CD14-positive monocyte (primary cell): ENCODE measurements at regions of chr22 and their contacts with region 1.

Region 1: GRCh38 chr22:36387752-36388518 is at the start of gene MYH9:
- DNase-seq: peak; percentile 99 to 100 (median 100)
- H3K4me3 ChIP-seq: peak within 1 kb of the TSS; percentile 71 to 99 (median 87)
- H3K4me3 Mint-ChIP-seq: peak within 1 kb of the TSS; percentile 92 to 95
- H3K27ac ChIP-seq: peak within 1 kb of the TSS; percentile 90 to 98
- H3K27ac Mint-ChIP-seq: peak within 1 kb of the TSS; percentile 94 to 99 (median 97)
- H3K4me1 ChIP-seq: peaks cover 61 to 74% of the 10 kb centered on the region in 2 donors
- H3K4me1 Mint-ChIP-seq: peaks cover 57% of the 10 kb centered on the region
- H3K27me3 ChIP-seq: no peaks in the 10 kb centered on the region
- H3K27me3 Mint-ChIP-seq: peaks cover 0 to 3% (median 1%) of the 10 kb centered on the region in 3 donors
- CTCF ChIP-seq: no peak
- polyA plus RNA-seq, gene MYH9: 35.6 to 163 (median 79.5) TPM

Region 2: DNA sequence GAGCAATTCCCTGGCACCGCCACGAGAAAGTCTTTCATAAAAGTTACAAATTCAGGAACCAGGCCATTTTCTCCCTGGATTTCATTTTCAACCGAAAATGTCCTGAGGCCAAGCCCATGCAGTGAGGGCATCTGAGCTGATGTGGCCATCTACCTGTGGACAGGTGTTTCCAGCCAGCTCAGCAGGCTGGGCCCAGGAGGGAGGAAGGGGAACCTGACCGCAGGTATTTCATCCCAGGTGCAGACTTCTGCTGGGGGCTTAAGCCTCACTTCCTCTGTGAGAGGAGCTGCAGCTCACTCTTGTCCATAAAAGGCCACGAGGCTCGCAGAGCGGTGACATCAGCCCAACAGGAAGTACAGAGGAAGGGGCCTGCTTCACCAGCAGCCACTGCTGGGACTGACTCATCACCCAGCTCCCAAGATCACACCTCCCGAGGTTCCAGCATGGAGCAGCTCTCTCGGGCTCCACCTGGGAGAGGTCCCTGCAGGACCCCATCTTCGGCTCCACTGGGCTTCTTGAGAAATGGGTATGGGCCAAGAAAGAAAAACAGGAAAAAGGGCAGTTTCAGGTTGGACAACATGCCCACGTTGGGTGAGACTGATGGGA is 56.5 kb before region 1 on chr22:
- intact Hi-C with region 1: loop called (anchors 1 to 5 kb)
- DNase-seq: peak; percentile 88 to 97 (median 94)
- H3K4me3 ChIP-seq: peak overlapping the region in 1 of 3 experiments; percentile 52
- H3K4me3 Mint-ChIP-seq: peak overlapping the region; percentile 63 to 88
- H3K27ac ChIP-seq: peak overlapping the region; percentile 89 to 92
- H3K27ac Mint-ChIP-seq: peak overlapping the region; percentile 96 to 99 (median 99)
- H3K4me1 ChIP-seq: peaks cover 74 to 79% of the 10 kb centered on the region in 2 donors
- H3K4me1 Mint-ChIP-seq: peaks cover 84% of the 10 kb centered on the region
- H3K27me3 ChIP-seq: no peaks in the 10 kb centered on the region
- H3K27me3 Mint-ChIP-seq: no peaks in the 10 kb centered on the region
- CTCF ChIP-seq: no peak

Region 3: GRCh38 chr22:36369922-36370791 is 17.8 kb before region 1 on chr22:
- intact Hi-C with region 1: loop called in 1 of 2 experiments (anchors 2 kb)
- DNase-seq: peak; percentile 66 to 76 (median 73)
- H3K4me3 ChIP-seq: peak overlapping the region in 1 of 3 experiments; percentile 45
- H3K4me3 Mint-ChIP-seq: peak overlapping the region; percentile 42 to 64
- H3K27ac ChIP-seq: peak overlapping the region; percentile 88 to 95
- H3K27ac Mint-ChIP-seq: peak overlapping the region; percentile 92 to 97 (median 97)
- H3K4me1 ChIP-seq: peaks cover 97 to 100% of the 10 kb centered on the region in 2 donors
- H3K4me1 Mint-ChIP-seq: peaks cover 96% of the 10 kb centered on the region
- H3K27me3 ChIP-seq: no peaks in the 10 kb centered on the region
- H3K27me3 Mint-ChIP-seq: peaks cover 0 to 2% (median 0%) of the 10 kb centered on the region in 3 donors
- CTCF ChIP-seq: no peak

Region 4: DNA sequence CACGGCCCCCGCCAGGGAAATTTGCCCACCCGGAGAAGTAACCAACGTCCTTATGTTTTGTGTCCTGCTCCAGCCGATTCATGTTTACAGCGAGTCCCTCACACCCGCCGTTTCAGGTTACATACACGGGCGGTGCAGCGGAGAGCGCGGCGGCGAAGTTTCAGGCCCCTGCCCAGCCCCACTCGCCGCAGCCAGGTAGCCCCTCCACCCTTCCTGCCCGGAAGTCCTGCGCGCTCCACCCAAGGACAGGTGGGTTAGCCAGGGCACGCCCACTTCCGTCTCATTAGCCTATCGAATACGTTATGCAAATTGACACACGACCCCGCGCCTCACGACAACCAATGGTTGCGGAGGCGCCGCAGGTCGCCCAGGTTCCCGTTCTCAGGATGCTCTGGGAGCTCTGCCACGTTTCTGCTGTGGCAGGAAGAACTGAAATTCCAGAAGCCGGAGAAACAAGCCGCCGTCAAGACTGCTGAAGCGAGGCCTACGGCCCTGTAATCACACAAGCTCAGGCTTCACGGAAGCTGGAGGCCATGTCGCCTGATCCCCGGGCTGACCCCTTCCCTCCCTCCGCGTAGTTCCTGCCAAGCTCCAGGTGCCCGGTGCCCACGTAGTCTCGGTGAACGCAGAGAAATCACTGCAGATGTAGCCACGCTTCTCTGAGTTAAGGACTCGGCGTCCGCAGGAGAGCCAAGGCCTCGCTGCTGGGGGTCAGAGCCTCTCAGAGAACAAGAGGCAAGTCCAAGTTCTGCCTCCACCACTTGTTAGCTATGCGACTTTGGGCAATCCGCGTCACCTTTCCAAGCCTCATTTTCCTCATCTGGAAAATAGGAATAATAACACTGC is 22.2 kb after region 1 on chr22:
- intact Hi-C with region 1: loop called in 1 of 2 experiments (anchors 2 kb)
- DNase-seq: peak in 2 of 3 donors; percentile 50 to 64
- H3K4me3 ChIP-seq: peak overlapping the region; percentile 7 to 73 (median 32)
- H3K4me3 Mint-ChIP-seq: peak overlapping the region; percentile 80 to 92
- H3K27ac ChIP-seq: peak overlapping the region in 1 of 2 donors; percentile 46
- H3K27ac Mint-ChIP-seq: peak overlapping the region in 6 of 7 donors; percentile 35 to 80 (median 56)
- H3K4me1 ChIP-seq: peaks cover 48 to 49% of the 10 kb centered on the region in 2 donors
- H3K4me1 Mint-ChIP-seq: peaks cover 53% of the 10 kb centered on the region
- H3K27me3 ChIP-seq: no peaks in the 10 kb centered on the region
- H3K27me3 Mint-ChIP-seq: peaks cover 0 to 3% (median 2%) of the 10 kb centered on the region in 3 donors
- CTCF ChIP-seq: no peak

Region 5: GRCh38 chr22:36425977-36426523 is 38.1 kb after region 1 on chr22:
- intact Hi-C with region 1: no loop called
- DNase-seq: peak in 2 of 3 donors; percentile 59 to 62
- H3K4me3 ChIP-seq: no peak overlapping the region
- H3K4me3 Mint-ChIP-seq: peak overlapping the region in 1 of 2 donors; percentile 26
- H3K27ac ChIP-seq: peak overlapping the region; percentile 30 to 49
- H3K27ac Mint-ChIP-seq: peak overlapping the region; percentile 46 to 82 (median 77)
- H3K4me1 ChIP-seq: peaks cover 41 to 43% of the 10 kb centered on the region in 2 donors
- H3K4me1 Mint-ChIP-seq: peaks cover 42% of the 10 kb centered on the region
- H3K27me3 ChIP-seq: no peaks in the 10 kb centered on the region
- H3K27me3 Mint-ChIP-seq: no peaks in the 10 kb centered on the region
- CTCF ChIP-seq: no peak

Region 6: DNA sequence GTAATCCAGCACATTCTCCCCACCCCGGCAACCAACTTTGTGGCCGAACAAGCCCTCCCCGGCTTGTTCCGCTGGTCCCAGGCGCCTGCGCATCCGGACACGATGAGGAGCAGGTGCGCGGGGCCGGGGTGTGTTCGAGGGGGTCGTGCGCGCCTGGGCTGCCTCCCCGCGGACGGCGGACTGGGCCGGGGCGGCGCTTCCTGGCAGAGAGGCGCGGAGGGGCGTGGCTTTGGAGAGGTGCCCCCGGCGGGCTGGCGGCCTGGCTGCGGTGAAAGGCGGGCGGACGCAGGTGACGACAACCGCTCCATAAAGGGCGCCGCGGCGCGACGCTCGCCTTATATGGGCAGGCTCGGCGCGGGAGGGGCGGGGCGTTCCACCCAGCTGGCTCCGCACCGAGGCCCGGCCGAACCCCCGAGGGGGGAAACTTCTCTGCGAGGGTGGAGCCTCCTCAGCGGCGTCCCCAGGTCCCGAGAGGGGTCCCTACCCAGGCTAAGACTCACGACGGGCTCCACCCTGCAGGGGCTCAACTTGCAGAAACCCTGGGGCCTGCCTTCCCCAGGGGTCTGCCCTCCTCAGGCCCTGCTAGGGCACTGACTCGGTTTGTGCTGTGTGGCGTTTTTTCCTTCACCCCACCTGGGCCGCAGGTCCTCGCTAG is 67.1 kb after region 1 on chr22:
- intact Hi-C with region 1: loop called (anchors 5 kb)
- DNase-seq: peak; percentile 63 to 84 (median 77)
- H3K4me3 ChIP-seq: peak overlapping the region; percentile 28 to 85 (median 48)
- H3K4me3 Mint-ChIP-seq: peak overlapping the region; percentile 70 to 71
- H3K27ac ChIP-seq: peak overlapping the region; percentile 37 to 67
- H3K27ac Mint-ChIP-seq: peak overlapping the region; percentile 18 to 90 (median 76)
- H3K4me1 ChIP-seq: peaks cover 67 to 75% of the 10 kb centered on the region in 2 donors
- H3K4me1 Mint-ChIP-seq: peaks cover 58% of the 10 kb centered on the region
- H3K27me3 ChIP-seq: no peaks in the 10 kb centered on the region
- H3K27me3 Mint-ChIP-seq: peaks cover 0 to 2% (median under 1%) of the 10 kb centered on the region in 3 donors
- CTCF ChIP-seq: no peak

Region 7: DNA sequence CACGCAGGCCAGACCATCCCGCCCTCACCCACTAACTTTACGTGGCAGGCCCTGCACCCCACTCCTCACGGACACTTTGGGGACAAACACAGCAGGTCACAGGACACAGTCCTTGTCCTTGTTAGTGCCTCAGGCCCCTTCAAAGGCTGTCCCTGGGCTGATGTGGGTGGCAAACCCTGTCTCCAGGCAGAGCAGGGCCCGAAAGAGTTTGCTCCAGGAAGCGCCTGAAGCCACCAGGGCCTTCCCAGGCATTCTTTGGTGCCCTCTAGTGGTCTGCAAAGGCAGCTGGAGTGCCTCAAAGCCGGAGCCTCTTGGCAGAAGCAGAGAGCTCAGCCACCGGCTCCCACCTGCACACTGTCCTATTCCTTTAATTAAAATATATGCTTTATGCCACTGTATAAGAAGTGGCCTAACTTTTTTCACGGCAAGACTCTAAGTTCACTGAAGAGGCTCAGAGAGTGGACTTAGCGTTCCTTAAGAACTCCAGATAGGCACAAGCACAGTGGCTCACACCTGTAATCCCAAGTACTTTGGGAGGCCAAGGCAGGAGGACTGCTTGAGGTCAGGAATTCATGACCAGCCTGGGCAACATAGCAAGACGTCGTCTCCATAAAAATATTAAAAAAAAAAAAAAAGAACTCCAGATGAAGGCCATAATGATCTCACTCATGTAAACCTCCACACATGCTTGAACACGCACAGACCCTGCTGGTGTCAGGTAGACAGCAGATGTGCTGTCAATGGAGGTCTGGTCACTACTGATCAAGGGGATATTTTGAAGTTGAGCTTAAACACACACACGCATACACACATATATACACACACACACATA is 82.4 kb after region 1 on chr22:
- intact Hi-C with region 1: loop called (anchors 5 to 10 kb)
- DNase-seq: peak; percentile 76 to 81 (median 76)
- H3K4me3 ChIP-seq: no peak overlapping the region
- H3K4me3 Mint-ChIP-seq: no peak overlapping the region
- H3K27ac ChIP-seq: no peak overlapping the region
- H3K27ac Mint-ChIP-seq: peak overlapping the region in 1 of 7 donors; percentile 19
- H3K4me1 ChIP-seq: peaks cover 57 to 60% of the 10 kb centered on the region in 2 donors
- H3K4me1 Mint-ChIP-seq: peaks cover 61% of the 10 kb centered on the region
- H3K27me3 ChIP-seq: no peaks in the 10 kb centered on the region
- H3K27me3 Mint-ChIP-seq: peaks cover 3 to 5% (median 3%) of the 10 kb centered on the region in 3 donors
- CTCF ChIP-seq: peak; percentile 92

Region 8: DNA sequence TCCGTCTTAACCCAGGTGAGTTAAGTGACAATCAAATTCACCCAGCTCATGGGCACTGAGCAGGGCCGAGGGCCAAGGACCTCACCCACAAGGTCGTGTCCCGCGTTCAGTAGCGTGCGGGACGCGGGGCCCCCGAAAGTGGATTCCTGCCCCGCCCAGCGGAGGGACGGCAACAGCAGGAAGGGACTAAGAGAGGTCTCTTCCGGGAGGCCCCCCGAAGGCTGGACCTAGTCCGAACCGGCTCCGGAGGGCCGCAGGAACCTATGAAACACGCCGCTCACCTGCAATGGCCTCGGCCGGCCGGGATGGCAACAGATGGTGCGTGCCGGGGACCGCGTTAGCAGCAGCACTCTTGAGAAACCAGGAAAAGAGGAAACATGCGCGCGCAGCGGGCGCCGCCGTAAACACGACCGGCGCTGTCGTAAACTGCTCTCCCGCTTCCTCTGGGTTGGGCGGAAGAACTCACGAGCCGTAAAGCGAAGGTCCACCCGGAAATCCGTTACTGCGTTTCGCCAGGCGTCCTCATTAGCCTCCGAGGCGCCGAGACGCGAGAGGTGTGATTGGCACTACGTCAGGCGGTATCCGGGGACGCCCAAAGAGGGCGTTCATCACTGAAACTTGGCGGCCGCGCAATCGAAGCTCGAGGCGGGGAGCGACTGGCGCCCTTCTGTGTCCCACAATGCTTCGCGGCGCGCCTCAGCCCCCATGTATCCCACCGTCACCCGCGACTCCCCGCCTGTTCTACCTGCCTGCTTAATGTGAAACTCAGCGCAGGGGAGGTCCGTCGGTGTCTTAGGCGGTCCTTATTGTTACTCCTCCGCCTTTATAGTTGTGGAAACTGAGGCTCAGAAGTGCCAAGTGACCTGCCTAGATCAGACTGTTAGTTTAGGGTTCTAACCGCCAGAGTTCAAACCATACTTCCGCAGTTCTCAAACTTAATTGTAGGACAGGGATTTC is 141.1 kb after region 1 on chr22 and contains the start of gene EIF3D:
- intact Hi-C with region 1: loop called in 1 of 2 experiments (anchors 5 kb)
- DNase-seq: peak; percentile 100
- H3K4me3 ChIP-seq: peak within 1 kb of the TSS; percentile 70 to 88 (median 75)
- H3K4me3 Mint-ChIP-seq: peak within 1 kb of the TSS; percentile 90 to 91
- H3K27ac ChIP-seq: peak within 1 kb of the TSS; percentile 90 to 96
- H3K27ac Mint-ChIP-seq: peak within 1 kb of the TSS; percentile 95 to 99 (median 98)
- H3K4me1 ChIP-seq: peaks cover 16 to 27% of the 10 kb centered on the region in 2 donors
- H3K4me1 Mint-ChIP-seq: peaks cover 20% of the 10 kb centered on the region
- H3K27me3 ChIP-seq: no peaks in the 10 kb centered on the region
- H3K27me3 Mint-ChIP-seq: peaks cover 2 to 5% (median 5%) of the 10 kb centered on the region in 3 donors
- CTCF ChIP-seq: no peak
- polyA plus RNA-seq, gene EIF3D: 102 to 244 (median 122) TPM

Region 9: GRCh38 chr22:36613958-36614357 is 226.0 kb after region 1 on chr22:
- intact Hi-C with region 1: no loop called
- DNase-seq: no peak
- H3K4me3 ChIP-seq: no peak overlapping the region
- H3K4me3 Mint-ChIP-seq: no peak overlapping the region
- H3K27ac ChIP-seq: no peak overlapping the region
- H3K27ac Mint-ChIP-seq: no peak overlapping the region
- H3K4me1 ChIP-seq: no peaks in the 10 kb centered on the region
- H3K4me1 Mint-ChIP-seq: no peaks in the 10 kb centered on the region
- H3K27me3 ChIP-seq: peaks cover 2 to 5% of the 10 kb centered on the region in 2 donors
- H3K27me3 Mint-ChIP-seq: peaks cover 17 to 39% (median 18%) of the 10 kb centered on the region in 3 donors
- CTCF ChIP-seq: no peak